ENCODE measurements at regions of chr7 and their contacts with region 1.

Region 1: GRCh38 chr7:137579913-137580640 is 236.5 kb upstream of the PTN start:
- DNase-seq: no peak
- H3K4me3 Mint-ChIP-seq: no peak overlapping the region
- H3K27ac Mint-ChIP-seq: peak overlapping the region; percentile 99
- H3K4me1 Mint-ChIP-seq: peaks cover 51% of the 10 kb centered on the region
- H3K27me3 Mint-ChIP-seq: no peaks in the 10 kb centered on the region
- CTCF ChIP-seq: no peak

Region 2: GRCh38 chr7:137507096-137507495 is 73.0 kb before region 1 on chr7:
- CTCF ChIA-PET with region 1: no interaction called
- intact Hi-C with region 1: loop called (anchors 5 kb)
- DNase-seq: no peak
- H3K4me3 Mint-ChIP-seq: no peak overlapping the region
- H3K27ac Mint-ChIP-seq: no peak overlapping the region
- H3K4me1 Mint-ChIP-seq: peaks cover 19% of the 10 kb centered on the region
- H3K27me3 Mint-ChIP-seq: no peaks in the 10 kb centered on the region
- CTCF ChIP-seq: no peak

Region 3: GRCh38 chr7:137798073-137798763 is 218.1 kb after region 1 on chr7:
- CTCF ChIA-PET with region 1: no interaction called
- intact Hi-C with region 1: no loop called
- DNase-seq: no peak
- H3K4me3 Mint-ChIP-seq: no peak overlapping the region
- H3K27ac Mint-ChIP-seq: no peak overlapping the region
- H3K4me1 Mint-ChIP-seq: no peaks in the 10 kb centered on the region
- H3K27me3 Mint-ChIP-seq: peaks cover 34% of the 10 kb centered on the region
- CTCF ChIP-seq: no peak

Measured in Calu3 (cell line).